PC-3 (cell line): ENCODE measurements at regions of chr3 and their contacts with region 1.

Region 1: GRCh38 chr3:42129014-42129953 is 38.1 kb downstream of the TRAK1 start:
- DNase-seq: peak; percentile 89
- ATAC-seq: peak; percentile 69
- H3K4me3 ChIP-seq: peak overlapping the region; percentile 43
- H3K27ac ChIP-seq: peak overlapping the region; percentile 96
- H3K4me1 ChIP-seq: peaks cover 38% of the 10 kb centered on the region
- H3K27me3 ChIP-seq: no peaks in the 10 kb centered on the region
- CTCF ChIP-seq: no peak

Region 2: DNA sequence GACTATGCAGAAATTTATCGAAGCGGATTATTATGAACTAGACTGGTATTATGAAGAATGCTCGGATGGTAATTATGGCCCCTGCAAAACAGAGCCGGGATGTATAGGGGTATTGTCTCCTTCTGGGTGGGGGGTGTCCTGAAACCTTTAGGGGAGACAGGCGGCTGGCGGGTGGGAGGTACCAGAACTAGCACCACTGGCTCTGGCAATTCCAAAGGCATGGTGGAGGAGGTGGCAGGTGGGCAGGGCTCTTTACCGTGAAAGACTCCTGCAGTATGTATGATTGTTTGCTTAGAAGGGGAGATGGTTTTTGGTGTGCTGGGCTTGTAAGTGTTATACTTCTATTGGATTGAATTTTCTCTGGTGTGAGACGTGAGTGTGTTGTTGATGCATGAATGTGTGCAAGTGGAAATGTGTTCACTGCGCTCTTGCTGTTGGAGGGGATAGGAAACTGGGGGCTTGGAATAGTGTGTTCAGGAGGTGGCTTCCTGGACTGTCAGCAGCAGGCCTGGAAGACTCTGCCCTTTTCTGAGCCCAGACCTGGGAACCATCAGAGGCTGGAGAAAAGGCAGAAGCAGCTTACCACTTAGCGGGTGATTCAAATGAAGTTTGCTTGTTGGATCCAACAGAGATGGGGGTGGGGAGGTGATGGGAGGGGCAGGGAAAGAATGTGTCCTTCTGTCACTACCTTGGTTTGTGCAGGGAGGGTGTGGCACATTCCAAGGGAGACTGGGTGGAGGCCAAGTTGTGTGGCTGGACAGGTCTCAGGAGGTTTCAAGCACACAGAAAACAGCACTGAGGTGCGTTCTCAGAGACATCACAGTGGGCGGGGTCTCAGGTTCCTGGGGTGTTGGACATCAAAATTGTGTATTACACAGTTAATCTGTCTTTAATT is 20.5 kb after region 1 on chr3:
- CTCF ChIA-PET with region 1: interaction called, 15 read pairs
- POLR2A ChIA-PET with region 1: no interaction called
- intact Hi-C with region 1: loop called (anchors 1 kb)
- DNase-seq: peak; percentile 96
- ATAC-seq: peak; percentile 77
- H3K4me3 ChIP-seq: peak overlapping the region; percentile 27; the same call in 1 of the 2 replicates
- H3K27ac ChIP-seq: peak overlapping the region; percentile 85
- H3K4me1 ChIP-seq: peaks cover 41% of the 10 kb centered on the region
- H3K27me3 ChIP-seq: no peaks in the 10 kb centered on the region
- CTCF ChIP-seq: no peak

Region 3: GRCh38 chr3:42159706-42160472 is 30.6 kb after region 1 on chr3:
- CTCF ChIA-PET with region 1: no interaction called
- POLR2A ChIA-PET with region 1: interaction called, 4 read pairs
- intact Hi-C with region 1: loop called (anchors 5 kb)
- DNase-seq: no peak
- ATAC-seq: no peak
- H3K4me3 ChIP-seq: no peak overlapping the region
- H3K27ac ChIP-seq: peak overlapping the region; percentile 75
- H3K4me1 ChIP-seq: peaks cover 67% of the 10 kb centered on the region
- H3K27me3 ChIP-seq: no peaks in the 10 kb centered on the region
- CTCF ChIP-seq: no peak

Region 4: GRCh38 chr3:42184651-42185443 is 55.6 kb after region 1 on chr3:
- CTCF ChIA-PET with region 1: interaction called, 5 read pairs
- POLR2A ChIA-PET with region 1: no interaction called
- intact Hi-C with region 1: loop called (anchors 1 kb)
- DNase-seq: peak; percentile 88
- ATAC-seq: peak; percentile 100
- H3K4me3 ChIP-seq: no peak overlapping the region
- H3K27ac ChIP-seq: peak overlapping the region; percentile 73
- H3K4me1 ChIP-seq: peaks cover 36% of the 10 kb centered on the region
- H3K27me3 ChIP-seq: no peaks in the 10 kb centered on the region
- CTCF ChIP-seq: no peak

Region 5: GRCh38 chr3:42190701-42191462 is 61.6 kb after region 1 on chr3:
- CTCF ChIA-PET with region 1: interaction called, 14 read pairs
- POLR2A ChIA-PET with region 1: no interaction called
- intact Hi-C with region 1: loop called (anchors 2 kb)
- DNase-seq: peak; percentile 90
- ATAC-seq: peak; percentile 94
- H3K4me3 ChIP-seq: no peak overlapping the region
- H3K27ac ChIP-seq: no peak overlapping the region
- H3K4me1 ChIP-seq: no peaks in the 10 kb centered on the region
- H3K27me3 ChIP-seq: no peaks in the 10 kb centered on the region
- CTCF ChIP-seq: peak; percentile 97